Endothelial cell of umbilical vein (primary cell): ENCODE measurements at regions of chr9 and their contacts with region 1.

Region 1: GRCh38 chr9:69898714-69899209 is 78.1 kb downstream of the CFAP95 start:
- DNase-seq: peak; percentile 95
- H3K4me3 ChIP-seq: peak overlapping the region in 1 of 3 experiments; percentile 12
- H3K27ac ChIP-seq: peak overlapping the region; percentile 94
- H3K4me1 ChIP-seq: peaks cover 32% of the 10 kb centered on the region
- H3K27me3 ChIP-seq: no peaks in the 10 kb centered on the region
- CTCF ChIP-seq: no peak
- POLR2A ChIP-seq: peak; percentile 75

Region 2: GRCh38 chr9:69857131-69857530 is 41.6 kb before region 1 on chr9:
- CTCF ChIA-PET with region 1: no interaction called
- POLR2A ChIA-PET with region 1: interaction called, 3 read pairs
- dilution Hi-C with region 1: no loop called
- intact Hi-C with region 1: loop called (anchors 2 kb)
- DNase-seq: peak; percentile 67
- H3K4me3 ChIP-seq: no peak overlapping the region
- H3K27ac ChIP-seq: no peak overlapping the region
- H3K4me1 ChIP-seq: peaks cover 24% of the 10 kb centered on the region
- H3K27me3 ChIP-seq: peaks cover 3 to 8% of the 10 kb centered on the region in 2 experiments
- CTCF ChIP-seq: no peak
- POLR2A ChIP-seq: no peak

Region 3: GRCh38 chr9:69885474-69885929 is 13.3 kb before region 1 on chr9:
- CTCF ChIA-PET with region 1: interaction called, 17 read pairs
- POLR2A ChIA-PET with region 1: interaction called, 5 read pairs
- dilution Hi-C with region 1: no loop called
- intact Hi-C with region 1: loop called (anchors 1 kb)
- DNase-seq: peak; percentile 67
- H3K4me3 ChIP-seq: no peak overlapping the region
- H3K27ac ChIP-seq: peak overlapping the region; percentile 52
- H3K4me1 ChIP-seq: peaks cover 17% of the 10 kb centered on the region
- H3K27me3 ChIP-seq: no peaks in the 10 kb centered on the region
- CTCF ChIP-seq: no peak
- POLR2A ChIP-seq: no peak

Region 4: DNA sequence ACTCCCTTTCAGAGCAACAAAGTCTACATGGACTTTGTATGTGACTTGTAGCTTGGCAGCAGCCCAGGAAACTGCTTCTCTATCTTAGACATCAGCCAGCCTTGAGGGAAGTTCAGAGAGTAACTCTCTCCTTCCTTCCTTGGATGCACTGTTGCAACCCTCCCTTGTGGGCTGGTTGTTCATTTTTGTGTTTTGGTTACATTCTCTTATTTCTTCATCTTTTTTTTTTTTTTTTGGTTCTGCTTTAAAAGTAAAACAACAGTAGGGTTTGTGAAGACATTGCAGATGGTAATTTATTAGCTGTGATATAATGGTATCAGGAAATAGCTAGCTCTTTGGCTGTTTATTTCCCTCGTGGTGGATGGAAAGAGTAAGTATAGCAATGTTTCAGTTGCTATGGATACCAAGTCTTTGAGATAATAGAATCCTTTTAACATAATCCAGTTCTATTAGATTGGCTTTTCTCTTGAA is 46.9 kb after region 1 on chr9:
- CTCF ChIA-PET with region 1: no interaction called
- POLR2A ChIA-PET with region 1: no interaction called
- dilution Hi-C with region 1: no loop called
- intact Hi-C with region 1: loop called (anchors 2 kb)
- DNase-seq: peak; percentile 62
- H3K4me3 ChIP-seq: no peak overlapping the region
- H3K27ac ChIP-seq: peak overlapping the region; percentile 90
- H3K4me1 ChIP-seq: peaks cover 22% of the 10 kb centered on the region
- H3K27me3 ChIP-seq: no peaks in the 10 kb centered on the region
- CTCF ChIP-seq: no peak
- POLR2A ChIP-seq: no peak